Naive thymus-derived CD4-positive, alpha-beta T cell (primary cell): ENCODE measurements at regions of chr15 and their contacts with region 1.

Region 1: DNA sequence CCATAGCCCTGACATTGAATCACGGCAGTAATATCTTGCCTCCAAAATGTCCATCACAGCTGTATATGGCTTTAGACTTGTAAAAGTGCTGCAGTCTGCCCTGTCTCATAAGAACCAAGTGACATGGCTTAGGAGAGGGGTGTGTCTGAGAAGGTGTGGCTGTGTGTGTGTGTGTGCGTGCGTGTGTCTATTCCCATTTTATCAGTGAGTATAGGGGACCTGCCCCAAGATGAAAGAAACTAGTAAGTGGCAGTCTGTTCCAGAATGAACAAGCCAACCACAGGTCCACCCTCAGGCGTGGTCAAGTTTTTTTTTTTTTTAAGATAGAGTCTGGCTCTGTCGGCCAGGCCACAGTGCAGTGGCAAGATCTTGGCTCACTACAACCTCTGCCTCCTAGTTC is 5.6 kb upstream of the RHOV start:
- DNase-seq: no peak
- ATAC-seq: no peak
- H3K4me3 ChIP-seq: no peak overlapping the region
- H3K4me3 Mint-ChIP-seq: peak overlapping the region in 1 of 10 donors; percentile 3
- H3K27ac ChIP-seq: no peak overlapping the region
- H3K27ac Mint-ChIP-seq: no peak overlapping the region
- H3K4me1 ChIP-seq: peaks cover under 1 to 7% of the 10 kb centered on the region in 2 donors
- H3K4me1 Mint-ChIP-seq: peaks cover 0 to 19% (median 2%) of the 10 kb centered on the region in 7 donors
- H3K27me3 ChIP-seq: no peaks in the 10 kb centered on the region
- H3K27me3 Mint-ChIP-seq: peaks cover 0 to 4% (median under 1%) of the 10 kb centered on the region in 5 donors

Region 2: GRCh38 chr15:40743921-40744814 is 135.4 kb before region 1 on chr15:
- CTCF ChIA-PET with region 1: interaction called, 11 read pairs
- POLR2A ChIA-PET with region 1: no interaction called
- intact Hi-C with region 1: no loop called
- DNase-seq: peak in 1 of 9 donors; percentile 68
- ATAC-seq: peak; percentile 90
- H3K4me3 ChIP-seq: no peak overlapping the region
- H3K4me3 Mint-ChIP-seq: peak overlapping the region in 2 of 10 donors; percentile 25 to 74
- H3K27ac ChIP-seq: no peak overlapping the region
- H3K27ac Mint-ChIP-seq: peak overlapping the region in 3 of 9 donors; percentile 30 to 94 (median 69)
- H3K4me1 ChIP-seq: peaks cover 0 to 20% of the 10 kb centered on the region in 2 donors
- H3K4me1 Mint-ChIP-seq: peaks cover 0 to 40% (median 0%) of the 10 kb centered on the region in 7 donors
- H3K27me3 ChIP-seq: no peaks in the 10 kb centered on the region
- H3K27me3 Mint-ChIP-seq: no peaks in the 10 kb centered on the region